Vagina (tissue), 2 donors: ENCODE measurements at regions of chr20 and their contacts with region 1.

Region 1: DNA sequence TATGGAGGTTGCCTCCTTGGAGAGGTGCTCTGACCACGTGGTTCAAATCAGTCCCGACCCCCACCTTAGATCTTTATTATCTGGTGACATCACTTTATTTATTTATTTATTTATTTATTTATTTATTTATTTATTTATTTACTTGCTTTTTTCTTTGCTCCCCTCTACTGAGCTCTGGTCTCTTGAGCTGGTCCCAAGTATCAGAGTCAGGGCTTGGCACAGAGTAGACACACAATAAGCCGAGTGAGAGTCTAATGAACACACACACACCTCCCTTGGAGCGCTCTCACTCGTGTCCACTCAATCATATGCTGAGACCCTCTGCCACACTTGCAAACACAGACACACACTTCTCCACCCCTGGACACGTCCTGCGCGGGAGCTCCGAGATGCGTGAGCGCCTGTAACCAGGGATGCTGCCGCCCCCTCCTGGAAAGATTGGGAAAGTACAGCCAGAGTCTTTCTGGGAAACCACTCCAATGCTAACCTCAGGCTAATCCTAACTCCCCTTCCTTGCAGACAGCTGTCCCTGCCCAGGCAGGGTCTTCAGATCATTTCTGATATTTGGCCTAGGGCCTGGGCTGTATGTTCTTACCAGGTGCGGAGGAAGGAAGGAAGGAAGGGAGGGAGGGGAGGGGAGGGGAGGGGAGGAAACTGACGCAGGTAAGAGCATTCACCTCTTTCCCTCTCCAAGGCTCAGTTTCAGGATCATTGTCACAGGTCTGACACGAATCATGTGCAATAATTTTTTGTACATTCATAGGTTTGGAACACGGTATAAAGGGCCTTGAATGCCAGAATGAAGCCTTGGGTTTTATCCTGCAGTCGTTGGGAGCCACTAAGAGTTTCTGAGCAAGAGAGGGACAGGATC is 70.9 kb downstream of the STK35 start:
- DNase-seq: no peak
- H3K4me3 ChIP-seq: no peak overlapping the region
- H3K27ac ChIP-seq: no peak overlapping the region
- H3K4me1 ChIP-seq: no peaks in the 10 kb centered on the region
- H3K27me3 ChIP-seq: no peaks in the 10 kb centered on the region
- CTCF ChIP-seq: peak; percentile 57 to 91 (median 83)
- POLR2A ChIP-seq: no peak

Region 2: GRCh38 chr20:1965520-1966351 is 206.8 kb before region 1 on chr20:
- intact Hi-C with region 1: loop called (anchors 5 kb)
- DNase-seq: no peak
- H3K4me3 ChIP-seq: peak overlapping the region in 1 of 2 donors; percentile 16
- H3K27ac ChIP-seq: no peak overlapping the region
- H3K4me1 ChIP-seq: peaks cover 12% of the 10 kb centered on the region
- H3K27me3 ChIP-seq: no peaks in the 10 kb centered on the region
- CTCF ChIP-seq: peak; percentile 56 to 93 (median 91)
- POLR2A ChIP-seq: no peak

Region 3: GRCh38 chr20:2052737-2053136 is 119.8 kb before region 1 on chr20:
- intact Hi-C with region 1: no loop called
- DNase-seq: no peak
- H3K4me3 ChIP-seq: no peak overlapping the region
- H3K27ac ChIP-seq: no peak overlapping the region
- H3K4me1 ChIP-seq: no peaks in the 10 kb centered on the region
- H3K27me3 ChIP-seq: no peaks in the 10 kb centered on the region
- CTCF ChIP-seq: no peak
- POLR2A ChIP-seq: no peak